ENCODE measurements at regions of chr2 and their contacts with region 1.

Region 1: GRCh38 chr2:109128048-109128465 is 948 bp upstream of the SH3RF3 start:
- DNase-seq: peak; percentile 94
- H3K4me3 ChIP-seq: peak overlapping the region; percentile 68 to 91 (median 81)
- H3K27ac ChIP-seq: peak overlapping the region; percentile 76 to 89 (median 84)
- H3K4me1 ChIP-seq: peaks cover 7 to 45% (median 34%) of the 10 kb centered on the region in 4 donors
- H3K27me3 ChIP-seq: peaks cover 0 to 22% (median 0%) of the 10 kb centered on the region in 4 donors
- CTCF ChIP-seq: peak; percentile 85 to 97 (median 91)
- EP300 ChIP-seq: no peak
- POLR2A ChIP-seq: no peak

Region 2: GRCh38 chr2:108998911-108999310 is 129.1 kb before region 1 on chr2:
- intact Hi-C with region 1: no loop called
- DNase-seq: no peak
- H3K4me3 ChIP-seq: no peak overlapping the region
- H3K27ac ChIP-seq: no peak overlapping the region
- H3K4me1 ChIP-seq: no peaks in the 10 kb centered on the region
- H3K27me3 ChIP-seq: no peaks in the 10 kb centered on the region
- CTCF ChIP-seq: no peak
- EP300 ChIP-seq: no peak
- POLR2A ChIP-seq: no peak

Region 3: GRCh38 chr2:109164739-109165221 is 36.7 kb after region 1 on chr2:
- intact Hi-C with region 1: loop called (anchors 5 kb)
- DNase-seq: no peak
- H3K4me3 ChIP-seq: no peak overlapping the region
- H3K27ac ChIP-seq: peak overlapping the region in 3 of 4 donors; percentile 25 to 57 (median 41)
- H3K4me1 ChIP-seq: peaks cover 28 to 35% (median 34%) of the 10 kb centered on the region in 4 donors
- H3K27me3 ChIP-seq: no peaks in the 10 kb centered on the region
- CTCF ChIP-seq: no peak
- EP300 ChIP-seq: no peak
- POLR2A ChIP-seq: no peak

Region 4: GRCh38 chr2:109324861-109325260 is 196.8 kb after region 1 on chr2:
- intact Hi-C with region 1: loop called (anchors 5 kb)
- DNase-seq: no peak
- H3K4me3 ChIP-seq: no peak overlapping the region
- H3K27ac ChIP-seq: peak overlapping the region; percentile 33 to 86 (median 53)
- H3K4me1 ChIP-seq: peaks cover 51 to 59% (median 53%) of the 10 kb centered on the region in 4 donors
- H3K27me3 ChIP-seq: no peaks in the 10 kb centered on the region
- CTCF ChIP-seq: no peak
- EP300 ChIP-seq: no peak
- POLR2A ChIP-seq: no peak

Region 5: GRCh38 chr2:109382951-109383350 is 254.9 kb after region 1 on chr2:
- intact Hi-C with region 1: loop called (anchors 10 kb)
- DNase-seq: no peak
- H3K4me3 ChIP-seq: no peak overlapping the region
- H3K27ac ChIP-seq: no peak overlapping the region
- H3K4me1 ChIP-seq: peaks cover 21 to 26% (median 24%) of the 10 kb centered on the region in 4 donors
- H3K27me3 ChIP-seq: no peaks in the 10 kb centered on the region
- CTCF ChIP-seq: no peak
- EP300 ChIP-seq: no peak
- POLR2A ChIP-seq: no peak

Region 6: DNA sequence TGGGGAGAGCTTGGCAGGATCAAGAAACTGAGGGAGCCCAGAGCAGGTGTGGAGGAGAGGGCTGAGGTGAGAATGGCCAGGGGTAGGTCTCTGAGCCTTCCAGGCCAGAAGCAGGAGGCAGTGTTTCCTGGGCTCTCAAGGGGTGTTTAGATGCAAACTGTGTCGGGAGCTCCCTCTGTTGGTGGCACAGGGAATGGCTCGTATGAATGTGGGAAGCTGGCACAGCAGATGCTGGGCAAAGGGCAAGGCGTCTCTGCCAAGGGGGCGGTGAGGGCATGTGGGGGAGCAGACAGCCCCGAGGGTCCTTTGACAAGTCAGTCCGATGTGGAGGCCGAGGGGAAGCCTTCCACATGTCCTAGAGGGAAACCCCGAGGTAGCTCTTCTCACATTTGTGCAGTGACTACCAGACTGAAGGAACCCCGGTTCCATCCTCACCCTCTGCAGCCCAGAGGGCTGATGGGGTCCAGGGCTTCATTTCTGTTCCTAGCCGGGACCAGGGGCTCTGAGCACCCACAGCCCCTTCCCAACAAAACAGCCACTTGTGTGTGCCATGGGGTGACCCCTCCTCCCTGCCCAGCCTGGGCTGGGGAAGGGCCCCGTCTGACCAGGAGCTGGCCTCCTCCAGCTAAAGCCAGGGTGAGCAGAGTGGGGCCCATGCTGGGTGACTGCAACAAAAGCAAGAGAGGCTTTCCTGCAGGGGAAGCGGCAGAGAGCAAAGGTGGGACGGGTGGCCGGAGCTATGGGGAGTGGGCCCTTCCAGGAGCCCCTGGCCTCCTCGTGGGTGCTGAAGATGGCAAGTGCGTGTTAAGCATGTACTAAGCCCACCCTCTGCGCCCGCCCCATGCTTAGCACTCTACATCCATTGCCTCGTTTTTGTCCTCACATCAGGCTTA is 382.3 kb after region 1 on chr2:
- intact Hi-C with region 1: loop called (anchors 1 kb)
- DNase-seq: peak; percentile 95
- H3K4me3 ChIP-seq: no peak overlapping the region
- H3K27ac ChIP-seq: no peak overlapping the region
- H3K4me1 ChIP-seq: peaks cover 13 to 33% (median 21%) of the 10 kb centered on the region in 4 donors
- H3K27me3 ChIP-seq: no peaks in the 10 kb centered on the region
- CTCF ChIP-seq: peak; percentile 88 to 97 (median 94)
- EP300 ChIP-seq: no peak
- POLR2A ChIP-seq: no peak